Dendritic cell treated with granulocyte-macrophage colony-stimulating factor and Interleukin-4, amounts not matched to agents 40 ng/mL and 50 ng/mL, for 4 days (primary cell): ENCODE measurements at regions of chr12 and their contacts with region 1.

Region 1: DNA sequence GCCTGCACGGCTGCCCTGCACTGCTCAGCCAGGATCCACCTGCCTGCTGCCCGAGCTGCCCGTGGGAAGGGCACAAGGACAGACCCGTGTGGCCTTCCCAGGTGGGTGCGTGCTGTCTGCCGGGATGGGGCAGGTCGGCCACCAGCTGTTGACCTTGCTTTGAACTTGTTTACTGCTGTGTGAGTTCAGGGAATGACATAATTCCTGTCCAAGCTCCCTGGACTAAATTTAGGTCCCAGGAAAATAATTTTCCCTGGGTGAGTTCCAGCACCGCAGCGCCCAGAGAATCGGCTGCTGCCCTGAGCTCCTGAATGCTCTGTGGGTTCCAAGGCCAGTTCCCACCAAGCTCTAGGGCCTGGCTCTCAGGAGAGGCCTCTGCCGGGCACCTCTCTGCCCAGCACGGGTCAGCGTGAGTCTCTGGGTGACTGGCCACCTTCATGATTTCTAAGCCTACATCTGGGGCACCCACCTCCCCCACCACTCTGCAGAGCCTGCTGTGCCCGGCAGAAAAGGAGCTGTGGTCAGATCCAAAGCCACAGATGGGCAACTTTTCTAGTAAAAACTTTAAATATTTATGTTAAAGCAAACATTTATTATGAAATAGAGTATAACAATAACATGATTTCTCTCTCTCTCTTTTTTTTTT is 27.2 kb upstream of the MLXIP start:
- H3K4me3 Mint-ChIP-seq: no peak overlapping the region
- H3K27ac Mint-ChIP-seq: no peak overlapping the region
- H3K4me1 Mint-ChIP-seq: no peaks in the 10 kb centered on the region
- H3K27me3 Mint-ChIP-seq: no peaks in the 10 kb centered on the region

Region 2: GRCh38 chr12:122123051-122123760 is 71.9 kb after region 1 on chr12:
- intact Hi-C with region 1: loop called (anchors 1 kb)
- H3K4me3 Mint-ChIP-seq: peak overlapping the region; percentile 31
- H3K27ac Mint-ChIP-seq: peak overlapping the region; percentile 45
- H3K4me1 Mint-ChIP-seq: peaks cover 51% of the 10 kb centered on the region
- H3K27me3 Mint-ChIP-seq: no peaks in the 10 kb centered on the region

Region 3: GRCh38 chr12:122190842-122191668 is 139.7 kb after region 1 on chr12:
- intact Hi-C with region 1: loop called (anchors 5 kb)
- H3K4me3 Mint-ChIP-seq: no peak overlapping the region
- H3K27ac Mint-ChIP-seq: no peak overlapping the region
- H3K4me1 Mint-ChIP-seq: peaks cover 3% of the 10 kb centered on the region
- H3K27me3 Mint-ChIP-seq: peaks cover 2% of the 10 kb centered on the region